ENCODE measurements at regions of chr3 and their contacts with region 1.

Region 1: DNA sequence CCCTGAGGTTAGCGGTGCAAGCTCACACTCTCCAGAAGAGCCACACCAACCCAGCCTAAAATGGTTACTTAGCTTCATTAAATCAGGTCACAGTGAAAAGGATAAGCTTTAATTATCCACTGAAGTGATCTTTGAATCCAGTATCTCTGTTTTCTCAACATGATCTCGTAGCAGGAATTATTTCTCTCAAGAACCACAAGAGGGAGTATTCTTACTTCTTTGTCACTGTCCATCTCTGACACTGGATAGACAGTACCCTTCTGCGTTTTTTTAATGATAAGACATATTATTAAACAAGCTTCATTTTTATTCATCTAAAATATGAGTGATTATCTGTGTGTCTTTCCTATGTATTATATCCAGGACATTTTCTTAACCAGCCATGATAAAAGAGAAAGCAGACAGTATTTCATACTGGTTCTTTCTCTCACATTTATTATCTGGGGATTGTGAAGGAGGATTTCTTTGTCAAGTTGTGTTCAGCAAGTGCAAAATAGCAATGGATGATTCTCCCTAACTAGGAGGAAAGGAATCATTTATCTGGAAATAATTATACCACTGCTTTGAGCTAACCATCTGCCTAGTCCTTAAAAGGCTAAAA is 105.4 kb upstream of the CCDC54 start:
- DNase-seq: no peak
- ATAC-seq: peak in 3 of 4 donors; percentile 45 to 72 (median 56)
- H3K4me3 ChIP-seq: no peak overlapping the region
- H3K27ac ChIP-seq: no peak overlapping the region
- H3K4me1 ChIP-seq: no peaks in the 10 kb centered on the region
- H3K27me3 ChIP-seq: no peaks in the 10 kb centered on the region
- CTCF ChIP-seq: peak; percentile 69

Region 2: DNA sequence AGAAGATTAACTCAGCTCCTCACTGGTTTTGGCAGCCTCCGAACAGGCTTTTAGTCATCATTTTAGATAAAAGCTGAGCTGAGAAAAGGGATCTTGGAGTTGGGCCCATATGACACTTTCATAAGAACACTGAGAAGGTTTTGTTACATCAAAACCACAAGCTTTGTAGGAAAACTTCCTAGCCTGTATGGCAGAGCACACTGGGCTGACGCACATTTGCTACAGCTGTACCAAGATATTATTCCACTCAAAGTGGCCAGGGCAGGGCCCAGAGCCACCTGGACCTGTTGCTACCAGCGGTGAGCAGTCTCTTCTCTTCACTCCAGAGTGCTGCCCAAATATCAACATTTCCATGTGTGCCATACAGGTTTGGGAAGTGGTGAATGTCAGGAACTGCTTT is 55.2 kb before region 1 on chr3:
- intact Hi-C with region 1: no loop called
- DNase-seq: no peak
- ATAC-seq: peak; percentile 42 to 83 (median 60)
- H3K4me3 ChIP-seq: no peak overlapping the region
- H3K27ac ChIP-seq: peak overlapping the region; percentile 28
- H3K4me1 ChIP-seq: peaks cover 11% of the 10 kb centered on the region
- H3K27me3 ChIP-seq: no peaks in the 10 kb centered on the region
- CTCF ChIP-seq: no peak

Region 3: GRCh38 chr3:107421170-107421792 is 149.4 kb after region 1 on chr3:
- intact Hi-C with region 1: loop called in 1 of 2 experiments (anchors 5 kb)
- DNase-seq: no peak
- ATAC-seq: peak in 2 of 4 donors; percentile 72 to 85
- H3K4me3 ChIP-seq: peak overlapping the region; percentile 51
- H3K27ac ChIP-seq: no peak overlapping the region
- H3K4me1 ChIP-seq: no peaks in the 10 kb centered on the region
- H3K27me3 ChIP-seq: no peaks in the 10 kb centered on the region
- CTCF ChIP-seq: peak; percentile 71

Region 4: GRCh38 chr3:107794664-107795443 is 523.0 kb after region 1 on chr3:
- intact Hi-C with region 1: no loop called
- DNase-seq: peak in 1 of 2 donors; percentile 19
- ATAC-seq: peak; percentile 28 to 79 (median 69)
- H3K4me3 ChIP-seq: no peak overlapping the region
- H3K27ac ChIP-seq: peak overlapping the region; percentile 44
- H3K4me1 ChIP-seq: no peaks in the 10 kb centered on the region
- H3K27me3 ChIP-seq: no peaks in the 10 kb centered on the region
- CTCF ChIP-seq: peak; percentile 13

Measured in psoas muscle (tissue), 8 donors.